ENCODE measurements at regions of chr3 and their contacts with region 1.

Region 1: GRCh38 chr3:47324278-47324865 is 41.6 kb downstream of the KLHL18 start:
- DNase-seq: peak; percentile 48
- ATAC-seq: peak; percentile 79
- H3K4me3 ChIP-seq: no peak overlapping the region
- H3K27ac ChIP-seq: 0 out of 2 replicates have a peak overlapping the region, but pooled peaks have one; percentile 15
- H3K4me1 ChIP-seq: peaks cover 8 to 20% of the 10 kb centered on the region in 2 experiments
- H3K27me3 ChIP-seq: no peaks in the 10 kb centered on the region
- CTCF ChIP-seq: peak; percentile 69 to 85 (median 81)
- POLR2A ChIP-seq: no peak
- RAD21 ChIP-seq: peak; percentile 85

Region 2: DNA sequence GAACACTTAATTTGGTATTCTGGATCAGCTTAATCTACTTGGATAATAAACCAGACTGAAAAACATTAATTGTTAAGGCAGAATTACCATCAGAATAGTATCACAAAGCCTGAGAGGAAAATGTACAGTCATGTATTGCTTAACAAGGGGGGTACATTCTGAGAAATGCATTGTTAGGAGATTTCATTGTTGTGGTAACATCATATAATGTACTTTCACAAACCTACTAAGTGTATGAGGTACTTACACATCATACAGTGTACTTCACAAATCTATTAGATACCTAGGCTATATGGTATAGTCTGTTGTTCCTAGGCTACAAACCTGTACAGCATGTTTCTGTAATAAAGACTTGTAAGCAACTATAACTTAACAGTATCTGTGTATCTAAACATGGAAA is 276.7 kb before region 1 on chr3:
- CTCF ChIA-PET with region 1: no interaction called
- POLR2A ChIA-PET with region 1: no interaction called
- RAD21 ChIA-PET with region 1: no interaction called
- intact Hi-C with region 1: loop called (anchors 10 kb)
- DNase-seq: no peak
- ATAC-seq: no peak
- H3K4me3 ChIP-seq: no peak overlapping the region
- H3K27ac ChIP-seq: no peak overlapping the region
- H3K4me1 ChIP-seq: no peaks in the 10 kb centered on the region
- H3K27me3 ChIP-seq: no peaks in the 10 kb centered on the region
- CTCF ChIP-seq: no peak
- POLR2A ChIP-seq: no peak
- RAD21 ChIP-seq: no peak

Region 3: DNA sequence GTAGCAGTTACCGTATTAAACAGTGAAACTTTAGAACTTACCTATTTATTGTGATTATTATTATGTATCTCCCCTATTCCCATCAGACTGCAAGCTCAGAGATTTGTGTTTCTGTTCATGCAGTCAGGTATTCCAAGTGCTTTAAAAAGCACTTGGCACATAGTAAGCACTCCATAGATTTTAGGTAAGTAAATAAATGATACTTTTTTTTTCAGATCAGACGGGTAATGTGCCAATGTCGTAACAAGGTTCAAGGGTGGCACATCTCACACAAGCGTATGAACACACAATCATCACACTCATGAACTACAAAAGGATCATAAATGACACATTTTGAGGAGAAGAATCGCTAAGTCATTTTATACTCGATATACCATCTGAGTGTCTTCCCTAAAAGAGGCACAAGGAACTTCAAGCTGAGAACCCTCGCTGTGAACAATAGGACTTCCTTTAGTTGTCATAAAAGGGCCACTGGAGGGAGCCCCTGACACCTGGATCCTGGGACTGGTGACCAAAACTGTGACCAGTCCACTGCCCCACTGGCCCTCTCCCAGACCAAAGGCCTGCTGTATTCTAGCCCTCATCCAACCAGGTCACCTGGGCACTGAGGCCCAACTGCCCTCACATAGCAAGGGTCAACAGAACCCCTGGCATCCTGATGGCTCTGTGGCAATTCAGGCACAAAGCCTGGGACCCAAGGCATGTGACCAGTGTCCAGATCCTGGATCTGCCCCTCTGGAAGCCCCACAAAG is 73.9 kb before region 1 on chr3:
- CTCF ChIA-PET with region 1: interaction called, 22 read pairs
- POLR2A ChIA-PET with region 1: no interaction called
- RAD21 ChIA-PET with region 1: interaction called in 1 of 2 experiments, 3 read pairs
- intact Hi-C with region 1: loop called (anchors 1 kb)
- DNase-seq: peak; percentile 41
- ATAC-seq: peak; percentile 93
- H3K4me3 ChIP-seq: no peak overlapping the region
- H3K27ac ChIP-seq: no peak overlapping the region
- H3K4me1 ChIP-seq: peaks cover 0 to 6% of the 10 kb centered on the region in 2 experiments; a peak in 1 of 4 replicates
- H3K27me3 ChIP-seq: no peaks in the 10 kb centered on the region
- CTCF ChIP-seq: peak; percentile 62 to 65 (median 64); a peak in 5 of 6 replicates
- POLR2A ChIP-seq: no peak
- RAD21 ChIP-seq: peak; percentile 81

Region 4: GRCh38 chr3:47491186-47491585 is 166.8 kb after region 1 on chr3:
- CTCF ChIA-PET with region 1: no interaction called
- POLR2A ChIA-PET with region 1: no interaction called
- RAD21 ChIA-PET with region 1: no interaction called
- intact Hi-C with region 1: no loop called
- DNase-seq: no peak
- ATAC-seq: no peak
- H3K4me3 ChIP-seq: no peak overlapping the region
- H3K27ac ChIP-seq: no peak overlapping the region
- H3K4me1 ChIP-seq: peaks cover 0 to 7% of the 10 kb centered on the region in 2 experiments; a peak in 2 of 4 replicates
- H3K27me3 ChIP-seq: no peaks in the 10 kb centered on the region
- CTCF ChIP-seq: no peak
- POLR2A ChIP-seq: no peak
- RAD21 ChIP-seq: no peak